GM18951 (cell line): ENCODE measurements at regions of chr17 and their contacts with region 1.

Region 1: DNA sequence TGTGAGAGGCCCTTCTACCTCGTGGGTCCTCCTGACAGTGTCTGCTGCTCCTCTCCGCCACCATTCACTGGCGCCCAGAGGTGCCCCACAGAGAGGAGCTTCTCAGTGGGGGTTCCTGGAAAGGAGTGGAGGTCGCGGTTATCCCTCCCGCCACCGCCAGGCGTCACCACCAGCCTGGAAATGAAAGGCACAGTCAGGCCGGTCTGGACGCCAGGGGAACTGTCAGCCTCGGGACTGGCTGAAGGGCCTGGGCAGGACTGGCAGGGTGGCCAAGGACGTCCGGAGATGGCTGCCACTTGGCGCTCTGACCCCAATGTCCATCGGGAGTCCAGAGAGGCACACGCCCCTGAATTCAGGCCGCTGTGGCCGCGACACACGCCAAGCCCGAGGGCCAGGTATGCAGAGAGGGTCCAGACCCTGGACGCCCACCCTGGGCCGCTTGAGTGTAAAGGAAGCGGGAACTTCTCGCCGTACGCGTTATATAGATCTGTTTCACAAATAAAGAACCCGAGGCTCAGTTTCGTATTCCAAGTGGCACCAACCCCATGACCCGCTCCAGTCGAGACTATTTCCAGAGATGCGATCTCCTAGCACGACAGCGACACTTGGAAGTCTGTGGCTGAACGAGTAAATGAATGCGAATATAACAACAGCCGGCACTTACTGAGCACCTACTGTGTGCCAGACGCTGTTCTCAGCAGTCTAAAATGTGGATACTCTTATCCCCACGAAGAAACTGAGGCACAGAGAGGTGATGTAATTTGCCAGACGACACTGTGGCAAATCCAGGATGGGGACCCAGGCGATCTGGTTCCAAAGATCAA is 7.6 kb upstream of the NXPH3 start:
- POLR2A ChIP-seq: no peak

Region 2: GRCh38 chr17:49763735-49764558 is 195.9 kb after region 1 on chr17 and contains the start of gene FAM117A:
- in situ Hi-C with region 1: no loop called
- POLR2A ChIP-seq: peak; percentile 96

Region 3: DNA sequence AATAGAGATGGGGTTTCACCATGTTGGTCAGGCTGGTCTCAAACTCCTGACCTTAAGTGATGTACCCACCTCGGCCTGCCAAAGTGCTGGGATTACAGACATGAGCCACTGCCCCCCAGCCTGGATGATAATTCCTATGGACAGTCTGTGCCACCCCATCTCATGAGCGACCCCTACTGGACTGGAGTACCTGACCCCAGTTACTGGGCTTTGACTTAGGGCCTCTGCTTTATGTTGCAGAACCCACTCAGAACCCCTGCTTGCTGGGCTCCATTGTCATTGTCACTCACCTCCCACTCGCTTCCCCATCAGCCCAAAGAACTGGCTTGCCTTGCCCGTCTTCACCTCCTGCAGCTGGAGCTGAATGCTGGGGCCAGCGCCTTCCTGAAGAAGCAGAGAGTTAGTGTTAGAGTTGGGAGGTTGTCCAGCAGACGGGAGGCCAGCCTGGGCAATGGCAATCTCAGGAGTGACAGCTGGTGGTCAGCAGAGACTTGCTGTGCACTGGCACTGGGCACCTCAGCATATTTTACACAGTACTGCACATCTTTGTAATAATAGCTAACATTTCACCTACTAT is 275.8 kb after region 1 on chr17:
- in situ Hi-C with region 1: loop called (anchors 25 kb)
- POLR2A ChIP-seq: no peak

Region 4: GRCh38 chr17:49997791-49998703 is 430.0 kb after region 1 on chr17:
- in situ Hi-C with region 1: loop called (anchors 10 kb)
- POLR2A ChIP-seq: no peak